Panc1 (cell line): ENCODE measurements at regions of chr3 and their contacts with region 1.

Region 1: DNA sequence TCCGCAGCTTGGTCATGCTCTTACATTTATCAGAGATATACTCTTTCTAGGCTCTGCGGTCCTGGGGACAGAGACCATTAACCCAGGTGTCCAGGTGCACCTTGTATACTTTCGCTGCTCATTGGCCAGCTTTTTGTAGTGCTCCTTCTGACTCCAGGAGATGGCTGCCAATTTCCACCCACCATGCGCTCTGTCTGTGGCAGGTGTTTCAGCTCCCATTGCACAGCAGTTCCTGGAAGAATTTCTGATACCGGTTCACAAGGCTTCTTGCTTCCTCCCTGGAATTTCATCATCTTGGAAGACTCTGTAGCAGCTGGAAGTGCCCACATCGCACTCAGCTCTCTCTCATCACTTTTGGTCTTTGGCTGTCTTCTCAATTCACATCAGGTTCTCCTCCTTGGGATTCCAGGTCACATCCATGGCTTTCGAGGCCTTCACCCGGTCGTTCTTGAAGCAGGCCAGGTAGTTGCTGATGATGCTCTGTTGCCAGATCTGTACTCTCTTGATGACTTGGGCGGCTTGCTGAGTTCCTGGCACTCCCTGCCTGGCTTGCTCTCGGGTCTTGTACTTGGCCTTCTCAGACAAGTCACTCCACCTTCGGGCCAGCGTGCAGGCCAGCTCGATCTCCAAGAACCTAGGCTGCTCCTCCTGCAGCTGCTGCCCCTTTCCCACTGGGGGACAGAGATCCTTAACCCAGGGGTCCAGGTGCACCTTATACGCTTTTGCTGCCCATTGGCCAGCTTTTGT is 41.1 kb upstream of the ARL8B start:
- DNase-seq: no peak
- ATAC-seq: no peak
- H3K4me3 ChIP-seq: no peak overlapping the region
- H3K27ac ChIP-seq: no peak overlapping the region
- H3K4me1 ChIP-seq: peaks cover 4% of the 10 kb centered on the region; the same call in 1 of the 2 replicates
- H3K27me3 ChIP-seq: no peaks in the 10 kb centered on the region
- CTCF ChIP-seq: no peak

Region 2: DNA sequence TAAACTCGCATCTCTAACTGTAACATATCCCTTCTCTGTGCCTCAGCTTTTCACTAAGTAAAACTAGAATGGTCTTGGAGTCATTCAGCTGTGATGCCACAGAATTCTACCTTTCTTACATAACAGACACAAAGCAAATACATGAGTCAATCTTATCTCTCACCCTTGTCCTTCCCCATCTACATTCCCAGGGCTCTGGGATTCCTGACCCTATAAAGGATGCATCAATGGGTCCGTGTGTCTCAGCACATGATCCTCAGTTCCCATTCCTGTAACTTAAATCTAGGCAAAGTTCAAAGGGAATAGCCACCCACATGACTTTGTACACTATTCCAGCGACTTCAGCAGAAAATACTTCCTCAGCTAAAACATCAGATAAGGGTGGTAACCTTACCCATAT is 29.4 kb after region 1 on chr3:
- CTCF ChIA-PET with region 1: no interaction called
- POLR2A ChIA-PET with region 1: interaction called, 10 read pairs
- in situ Hi-C with region 1: no loop called
- intact Hi-C with region 1: no loop called
- DNase-seq: no peak
- ATAC-seq: no peak
- H3K4me3 ChIP-seq: no peak overlapping the region
- H3K27ac ChIP-seq: no peak overlapping the region
- H3K4me1 ChIP-seq: no peaks in the 10 kb centered on the region
- H3K27me3 ChIP-seq: no peaks in the 10 kb centered on the region
- CTCF ChIP-seq: no peak